ENCODE measurements at regions of chr3 and their contacts with region 1.

Region 1: DNA sequence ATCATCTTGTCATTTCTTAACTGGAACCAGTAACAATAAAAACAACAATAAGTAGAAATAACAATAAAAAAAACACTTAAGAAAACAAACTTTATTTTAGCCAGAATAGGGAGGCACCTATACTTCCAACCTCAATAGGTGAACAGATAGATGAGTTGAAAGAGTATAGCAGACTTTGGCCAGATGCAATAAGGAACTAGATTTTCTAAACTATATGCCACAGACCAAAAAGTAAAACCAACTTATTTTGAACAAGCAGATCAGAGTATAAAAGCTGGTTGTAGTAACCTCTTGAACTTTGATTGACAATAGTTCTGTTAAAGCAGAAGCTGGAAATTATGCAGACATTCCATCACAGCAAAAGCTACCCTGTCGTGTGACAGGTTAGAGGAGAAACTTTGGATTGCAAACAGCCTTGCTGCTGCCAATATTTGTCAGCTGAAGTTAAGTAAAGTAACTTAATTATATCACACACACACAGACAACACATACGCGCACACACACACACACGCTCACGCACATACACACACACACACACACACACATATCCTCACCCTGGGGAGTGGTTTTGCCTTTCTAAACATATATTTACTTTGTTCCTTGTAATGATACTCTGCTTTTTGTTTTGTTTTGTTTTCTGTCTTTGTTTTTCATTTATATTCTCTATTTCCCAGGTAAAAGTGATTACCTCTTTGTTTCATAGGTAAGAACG is 903.6 kb downstream of the VGLL3 start:
- DNase-seq: no peak
- ATAC-seq: no peak

Region 2: GRCh38 chr3:85304359-85304964 is 782.9 kb before region 1 on chr3:
- intact Hi-C with region 1: loop called (anchors 5 kb)
- DNase-seq: no peak
- ATAC-seq: no peak